Activated CD8-positive, alpha-beta T cell treated with anti-CD3 and anti-CD28 coated beads for 36 hours (primary cell): ENCODE measurements at regions of chr16 and their contacts with region 1.

Region 1: GRCh38 chr16:46929378-46930332 is 43.8 kb downstream of the DNAJA2 start:
- DNase-seq: peak; percentile 72
- ATAC-seq: peak; percentile 87
- H3K4me3 Mint-ChIP-seq: no peak overlapping the region
- H3K27ac Mint-ChIP-seq: no peak overlapping the region
- H3K4me1 Mint-ChIP-seq: no peaks in the 10 kb centered on the region
- H3K27me3 Mint-ChIP-seq: no peaks in the 10 kb centered on the region
- CTCF ChIP-seq: peak; percentile 92

Region 2: DNA sequence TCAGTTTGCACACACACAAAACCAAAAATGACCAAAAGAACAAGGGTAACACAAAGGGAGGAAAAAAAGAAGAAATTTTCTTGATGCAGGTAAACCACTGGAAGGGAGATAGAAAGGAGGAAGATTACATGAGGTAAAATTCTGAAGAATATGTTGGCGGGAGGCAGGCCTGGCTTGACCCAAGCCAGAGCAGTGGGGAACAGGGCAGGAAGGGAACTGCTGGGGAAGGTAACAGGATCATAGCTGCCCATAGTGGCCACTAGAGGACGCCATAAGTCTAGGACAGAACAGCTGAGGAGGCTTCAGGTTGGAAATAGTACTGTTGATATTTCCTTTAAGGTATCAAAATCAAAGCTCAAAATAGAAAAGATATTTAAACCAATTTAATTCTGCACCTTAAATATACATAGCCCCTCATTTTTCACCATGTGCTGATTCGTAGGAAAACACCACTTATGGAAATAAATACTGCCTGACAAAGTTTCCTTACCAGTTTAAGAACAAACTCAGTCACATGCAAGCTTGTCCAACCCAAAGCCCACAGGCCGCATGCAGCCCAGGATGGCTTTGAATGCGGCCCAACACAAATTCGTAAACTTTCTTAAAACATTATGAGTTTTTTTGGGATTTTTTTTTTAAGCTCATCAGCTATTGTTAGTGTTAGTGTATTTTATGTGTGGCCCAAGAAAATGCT is 256.2 kb before region 1 on chr16:
- CTCF ChIA-PET with region 1: interaction called, 19 read pairs
- POLR2A ChIA-PET with region 1: no interaction called
- intact Hi-C with region 1: no loop called
- DNase-seq: peak; percentile 66
- ATAC-seq: peak; percentile 96
- H3K4me3 Mint-ChIP-seq: no peak overlapping the region
- H3K27ac Mint-ChIP-seq: no peak overlapping the region
- H3K4me1 Mint-ChIP-seq: no peaks in the 10 kb centered on the region
- H3K27me3 Mint-ChIP-seq: no peaks in the 10 kb centered on the region
- CTCF ChIP-seq: peak; percentile 97

Region 3: GRCh38 chr16:46853713-46854443 is 75.8 kb before region 1 on chr16:
- CTCF ChIA-PET with region 1: interaction called, 49 read pairs
- POLR2A ChIA-PET with region 1: no interaction called
- intact Hi-C with region 1: no loop called
- DNase-seq: peak; percentile 73
- ATAC-seq: peak; percentile 51
- H3K4me3 Mint-ChIP-seq: no peak overlapping the region
- H3K27ac Mint-ChIP-seq: no peak overlapping the region
- H3K4me1 Mint-ChIP-seq: no peaks in the 10 kb centered on the region
- H3K27me3 Mint-ChIP-seq: no peaks in the 10 kb centered on the region
- CTCF ChIP-seq: peak; percentile 80

Region 4: DNA sequence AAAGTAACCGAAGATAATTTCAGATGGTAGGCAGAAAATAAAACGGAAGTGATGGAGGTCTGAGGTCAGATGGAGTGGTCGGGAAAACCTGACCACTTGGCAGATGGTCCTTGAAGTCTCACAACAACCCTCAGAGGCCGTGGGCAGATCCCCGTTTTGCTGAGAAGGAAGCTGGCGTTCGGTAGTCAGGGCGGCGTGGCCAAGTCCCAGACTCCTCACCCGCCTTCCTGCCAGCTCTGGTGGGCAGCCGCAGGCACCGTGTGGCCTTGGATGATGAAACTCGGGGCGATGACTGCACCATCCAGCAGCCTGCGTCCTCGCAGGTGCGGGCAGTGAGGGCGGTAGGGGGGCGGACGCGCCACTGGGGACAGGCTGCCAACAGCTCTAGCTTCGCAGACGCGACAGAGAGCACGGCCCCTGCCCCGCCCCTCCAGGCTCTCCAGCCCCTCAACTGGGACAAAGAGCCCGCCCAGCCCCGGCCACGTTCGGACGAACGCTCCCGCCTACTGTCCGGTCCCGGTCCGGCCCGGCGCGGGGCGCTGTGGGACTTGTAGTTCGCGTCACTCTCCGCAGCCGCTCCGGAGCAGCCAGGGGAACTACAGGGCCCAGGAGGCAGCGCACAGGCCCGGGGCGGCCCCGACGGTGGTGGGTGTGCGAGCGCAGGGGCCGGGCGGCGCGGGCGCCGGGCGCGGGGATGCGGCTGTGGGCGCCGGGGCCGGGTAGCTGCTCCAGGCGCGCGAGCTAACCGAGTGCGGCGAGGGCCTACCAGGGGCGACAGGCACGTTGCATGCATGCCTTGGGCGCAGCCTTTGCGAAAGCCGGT is 45.8 kb before region 1 on chr16 and contains the start of gene GPT2:
- CTCF ChIA-PET with region 1: interaction called, 13 read pairs
- POLR2A ChIA-PET with region 1: interaction called, 3 read pairs
- intact Hi-C with region 1: no loop called
- DNase-seq: peak; percentile 91
- ATAC-seq: peak; percentile 95
- H3K4me3 Mint-ChIP-seq: peak within 1 kb of the TSS; percentile 80
- H3K27ac Mint-ChIP-seq: peak within 1 kb of the TSS; percentile 93
- H3K4me1 Mint-ChIP-seq: peaks cover 16% of the 10 kb centered on the region
- H3K27me3 Mint-ChIP-seq: peaks cover 22% of the 10 kb centered on the region
- CTCF ChIP-seq: no peak
- total RNA-seq, gene GPT2: 39.3 to 50.6 TPM

Region 5: DNA sequence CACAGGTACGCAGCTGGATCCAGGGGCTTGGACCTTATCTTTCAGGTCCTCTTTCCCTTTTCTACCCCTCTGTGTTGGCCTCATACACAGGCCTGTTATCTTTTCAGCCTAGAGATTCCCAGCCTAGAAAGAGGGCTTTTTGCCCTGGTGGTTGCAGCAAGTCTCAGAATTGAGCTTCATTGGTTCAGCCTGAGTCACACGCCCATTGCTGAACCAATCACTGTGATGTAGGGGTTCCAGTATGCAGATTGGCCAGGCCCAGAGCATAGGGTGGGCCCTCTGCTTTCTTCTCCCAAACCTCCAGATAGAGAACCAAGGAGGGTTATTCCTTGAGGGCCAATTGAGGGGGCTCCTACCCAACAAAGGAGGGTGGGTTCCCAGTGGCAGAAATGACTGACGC is 12.7 kb before region 1 on chr16:
- CTCF ChIA-PET with region 1: interaction called, 15 read pairs
- POLR2A ChIA-PET with region 1: interaction called, 3 read pairs
- intact Hi-C with region 1: no loop called
- DNase-seq: no peak
- ATAC-seq: peak; percentile 56
- H3K4me3 Mint-ChIP-seq: no peak overlapping the region
- H3K27ac Mint-ChIP-seq: no peak overlapping the region
- H3K4me1 Mint-ChIP-seq: no peaks in the 10 kb centered on the region
- H3K27me3 Mint-ChIP-seq: no peaks in the 10 kb centered on the region
- CTCF ChIP-seq: no peak

Region 6: DNA sequence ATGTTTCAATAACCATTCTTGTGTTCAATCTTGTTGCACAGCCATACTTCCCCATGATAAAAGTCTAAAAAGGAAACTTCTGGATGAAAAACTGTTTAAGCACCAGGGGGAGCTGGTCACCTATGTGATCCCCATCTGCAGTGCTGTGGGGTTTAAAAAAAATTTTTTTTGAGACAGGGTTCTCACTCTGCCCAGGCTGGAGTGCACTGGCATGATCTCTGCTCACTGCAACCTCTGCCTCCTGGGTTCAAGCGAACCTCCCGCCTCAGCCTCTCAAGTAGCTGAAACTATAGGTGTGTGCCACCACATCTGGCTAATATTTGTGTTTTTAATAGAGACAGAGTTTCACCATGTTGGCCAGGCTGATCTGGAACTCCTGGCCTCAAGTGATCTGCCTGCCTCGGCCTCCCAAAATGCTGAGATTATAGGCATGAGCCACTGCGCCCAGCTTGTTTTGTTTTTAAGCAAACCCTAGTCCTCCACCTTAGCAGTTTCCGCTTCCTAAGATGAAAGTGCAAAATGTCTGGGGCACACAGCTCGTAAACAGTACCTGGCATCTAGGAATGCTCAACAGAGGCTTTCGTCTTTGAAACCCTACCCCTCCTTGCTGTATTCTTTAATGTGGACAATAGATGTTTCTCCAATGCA is 18.4 kb after region 1 on chr16:
- CTCF ChIA-PET with region 1: interaction called, 21 read pairs
- POLR2A ChIA-PET with region 1: no interaction called
- intact Hi-C with region 1: no loop called
- DNase-seq: peak; percentile 56
- ATAC-seq: peak; percentile 70
- H3K4me3 Mint-ChIP-seq: no peak overlapping the region
- H3K27ac Mint-ChIP-seq: no peak overlapping the region
- H3K4me1 Mint-ChIP-seq: peaks cover 7% of the 10 kb centered on the region
- H3K27me3 Mint-ChIP-seq: no peaks in the 10 kb centered on the region
- CTCF ChIP-seq: peak; percentile 70

Region 7: DNA sequence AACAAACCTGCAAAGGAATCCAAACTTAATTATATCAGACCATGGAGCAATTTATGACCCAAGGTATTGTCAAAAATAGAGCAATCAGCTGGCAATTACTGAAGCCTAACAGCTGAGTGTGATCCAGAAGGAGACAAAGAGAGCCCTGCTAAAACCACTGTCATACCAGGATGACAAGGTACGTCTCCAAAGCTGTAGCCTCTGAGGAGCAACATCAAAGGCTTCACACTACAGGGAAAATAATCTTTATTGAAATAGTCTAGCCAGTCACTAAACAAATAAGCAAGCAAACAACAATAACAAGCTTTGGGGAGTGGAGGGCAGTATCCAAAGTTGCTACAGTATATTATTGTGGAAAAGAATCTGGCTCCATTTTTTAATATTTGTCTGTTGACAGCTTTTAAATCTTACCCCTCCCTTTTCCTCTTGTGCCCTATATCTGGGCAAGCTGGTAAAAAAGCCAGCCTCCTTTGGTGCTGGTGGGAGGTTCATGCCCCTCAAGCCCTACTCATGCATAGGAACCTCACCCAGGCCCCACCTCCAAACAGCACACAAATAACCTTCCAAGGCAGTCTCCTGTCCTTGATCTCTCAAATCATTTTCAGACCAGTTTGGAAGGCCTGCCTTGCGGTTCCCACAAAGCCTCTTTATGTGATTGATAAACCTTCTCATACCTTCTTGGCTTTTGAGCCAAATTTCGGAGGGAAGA is 457.5 kb after region 1 on chr16:
- CTCF ChIA-PET with region 1: no interaction called
- POLR2A ChIA-PET with region 1: no interaction called
- intact Hi-C with region 1: no loop called
- DNase-seq: no peak
- ATAC-seq: no peak
- H3K4me3 Mint-ChIP-seq: no peak overlapping the region
- H3K27ac Mint-ChIP-seq: no peak overlapping the region
- H3K4me1 Mint-ChIP-seq: peaks cover 4% of the 10 kb centered on the region
- H3K27me3 Mint-ChIP-seq: no peaks in the 10 kb centered on the region
- CTCF ChIP-seq: no peak